ENCODE measurements at regions of chr6 and their contacts with region 1.

Region 1: DNA sequence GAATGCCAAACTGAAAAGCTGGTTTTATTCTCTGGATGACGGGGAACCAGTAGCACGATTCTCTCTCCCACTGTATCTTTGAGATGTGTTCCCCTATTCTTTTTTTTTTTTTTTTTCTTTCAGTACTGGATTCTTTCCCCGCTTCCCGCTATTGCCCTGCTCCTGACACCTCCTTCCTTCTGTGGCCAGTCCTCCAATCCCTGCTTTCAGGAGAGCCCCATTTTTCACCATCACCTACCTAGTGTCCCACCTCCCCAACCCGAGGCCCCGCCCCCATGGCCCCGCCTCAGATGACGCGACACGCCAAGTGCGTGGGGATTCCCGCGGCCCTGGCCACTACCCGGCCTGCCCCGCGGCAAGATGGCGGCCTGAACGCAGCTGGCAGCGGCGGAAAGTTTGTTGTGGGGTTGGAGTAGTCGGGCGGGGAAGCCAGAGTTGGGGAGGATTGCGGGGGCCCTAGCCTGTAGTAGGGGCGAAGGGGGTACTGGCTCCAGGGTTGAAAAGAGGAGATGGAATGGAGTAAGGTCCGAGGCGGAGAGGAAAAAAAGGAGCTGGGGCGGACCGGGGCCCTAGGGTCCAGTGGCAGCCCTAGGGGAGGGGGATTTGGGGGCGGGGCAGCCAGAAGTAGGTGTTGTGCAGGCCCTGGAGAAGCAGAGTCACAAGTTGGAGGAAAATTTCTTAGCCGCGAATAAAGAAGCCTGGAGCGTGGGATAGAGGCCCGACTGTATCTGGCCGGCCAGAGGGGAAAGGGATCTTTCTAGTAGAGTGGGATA is at the start of gene TJAP1:
- DNase-seq: peak; percentile 91 to 99 (median 95)

Region 2: GRCh38 chr6:43516697-43517504 is 39.5 kb after region 1 on chr6 and contains the starts of genes POLR1C and YIPF3:
- intact Hi-C with region 1: loop called (anchors 1 kb)
- DNase-seq: peak; percentile 92 to 99 (median 98)

Region 3: DNA sequence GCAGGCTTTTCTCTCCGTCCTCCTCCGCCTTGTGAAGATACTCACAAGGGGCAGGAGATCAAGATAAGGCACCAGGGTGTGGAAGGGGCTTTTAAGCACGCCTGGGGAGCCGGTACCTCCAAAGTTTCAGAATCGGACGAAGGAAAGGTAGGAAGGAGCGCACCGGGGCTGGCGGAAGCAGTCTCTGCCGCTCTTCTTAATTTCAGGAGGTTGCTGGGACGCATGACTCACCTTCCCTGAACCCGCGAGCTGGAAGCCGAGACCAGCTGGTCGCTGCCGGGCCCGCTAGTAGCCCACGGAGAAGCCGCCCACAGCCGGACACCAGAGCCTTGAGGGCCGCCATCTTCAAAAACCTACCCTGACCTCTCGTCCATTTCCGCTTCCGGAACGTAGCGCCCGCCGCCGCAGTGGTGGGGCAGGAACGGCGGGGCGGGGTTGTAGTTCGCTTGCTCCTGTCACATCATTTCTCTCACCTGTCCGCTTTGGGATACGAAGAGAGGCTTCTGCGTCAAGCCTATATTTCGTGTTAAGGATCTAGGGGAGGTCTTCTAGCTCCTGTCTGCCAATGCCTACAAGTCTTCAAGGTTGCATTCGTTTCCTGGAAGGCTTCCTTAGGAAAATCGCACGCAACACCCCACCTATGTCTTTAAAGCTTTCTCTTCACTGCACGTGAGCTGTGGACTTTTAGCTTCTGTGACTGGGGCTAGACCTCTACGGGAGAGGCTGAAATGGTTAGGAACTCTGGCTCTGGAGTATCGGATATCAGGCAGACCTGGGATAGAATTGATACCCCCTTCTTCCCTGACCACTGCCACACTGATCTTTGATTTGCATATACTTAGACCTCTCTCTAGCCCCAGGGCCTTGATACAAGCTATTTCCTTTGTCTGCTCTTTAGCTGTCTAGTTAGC is 210.3 kb after region 1 on chr6 and contains the start of gene MRPS18A:
- intact Hi-C with region 1: no loop called
- DNase-seq: peak; percentile 80 to 98 (median 90)

Measured in posterior cingulate gyrus (tissue), 11 donors.